ENCODE measurements at regions of chr1 and their contacts with region 1.

Region 1: GRCh38 chr1:65687428-65688214 is 105.1 kb upstream of the PDE4B start:
- DNase-seq: peak; percentile 81
- H3K4me3 ChIP-seq: no peak overlapping the region
- H3K27ac ChIP-seq: no peak overlapping the region
- H3K4me1 ChIP-seq: peaks cover 4% of the 10 kb centered on the region
- H3K27me3 ChIP-seq: no peaks in the 10 kb centered on the region
- CTCF ChIP-seq: peak; percentile 91

Region 2: GRCh38 chr1:65059930-65060538 is 627.6 kb before region 1 on chr1:
- CTCF ChIA-PET with region 1: no interaction called
- POLR2A ChIA-PET with region 1: no interaction called
- intact Hi-C with region 1: loop called (anchors 5 kb)
- DNase-seq: peak; percentile 60
- H3K4me3 ChIP-seq: no peak overlapping the region
- H3K27ac ChIP-seq: no peak overlapping the region
- H3K4me1 ChIP-seq: peaks cover 34% of the 10 kb centered on the region
- H3K27me3 ChIP-seq: no peaks in the 10 kb centered on the region
- CTCF ChIP-seq: peak; percentile 69

Region 3: GRCh38 chr1:65214340-65215027 is 473.1 kb before region 1 on chr1:
- CTCF ChIA-PET with region 1: interaction called, 18 read pairs
- POLR2A ChIA-PET with region 1: no interaction called
- intact Hi-C with region 1: loop called (anchors 5 kb)
- DNase-seq: no peak
- H3K4me3 ChIP-seq: no peak overlapping the region
- H3K27ac ChIP-seq: no peak overlapping the region
- H3K4me1 ChIP-seq: no peaks in the 10 kb centered on the region
- H3K27me3 ChIP-seq: no peaks in the 10 kb centered on the region
- CTCF ChIP-seq: no peak

Region 4: DNA sequence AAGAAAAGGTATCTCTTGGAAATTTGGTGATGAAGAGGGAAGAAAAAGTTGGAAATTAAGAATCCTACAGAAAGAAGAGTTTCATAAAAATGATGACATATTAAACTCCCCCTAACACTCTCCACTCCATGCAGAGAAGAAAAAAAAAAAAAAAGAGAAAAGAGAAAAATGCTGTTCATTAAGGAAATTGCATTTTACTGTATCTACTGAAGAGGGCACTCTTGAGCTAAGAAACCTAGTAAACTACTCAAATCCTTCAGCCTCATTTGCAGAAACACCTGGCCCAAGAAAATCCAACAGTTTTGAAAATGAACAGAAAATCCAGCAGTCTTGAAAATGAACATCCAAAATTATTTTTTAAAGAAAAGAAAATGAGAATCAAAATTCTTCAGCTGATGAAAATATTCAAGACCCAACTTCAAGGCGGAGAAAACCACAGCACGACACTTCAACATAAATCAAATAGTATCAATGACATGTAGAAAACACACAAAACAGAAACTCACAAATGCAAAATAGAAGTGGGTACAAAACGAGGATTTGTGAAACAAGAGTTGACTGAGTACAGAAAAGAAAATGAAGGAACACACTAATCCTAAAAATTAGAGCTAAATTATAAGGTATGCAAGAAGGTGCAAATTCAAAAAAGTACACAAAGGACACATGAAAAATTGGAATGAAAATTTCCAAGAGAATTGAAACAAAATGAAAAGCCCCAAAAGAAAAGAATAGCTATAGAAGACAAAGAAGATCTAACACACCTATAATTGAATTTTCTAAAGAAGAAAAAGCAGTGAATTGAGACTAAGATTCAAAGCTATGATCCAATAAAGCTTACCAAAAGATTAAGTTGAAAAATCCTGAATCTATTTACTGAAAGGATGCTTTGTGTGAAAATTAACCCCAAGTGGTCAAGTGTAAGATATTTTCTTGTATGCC is 451.5 kb before region 1 on chr1:
- CTCF ChIA-PET with region 1: interaction called, 6 read pairs
- POLR2A ChIA-PET with region 1: no interaction called
- intact Hi-C with region 1: loop called (anchors 5 kb)
- DNase-seq: peak; percentile 61
- H3K4me3 ChIP-seq: no peak overlapping the region
- H3K27ac ChIP-seq: no peak overlapping the region
- H3K4me1 ChIP-seq: no peaks in the 10 kb centered on the region
- H3K27me3 ChIP-seq: no peaks in the 10 kb centered on the region
- CTCF ChIP-seq: peak; percentile 73

Region 5: DNA sequence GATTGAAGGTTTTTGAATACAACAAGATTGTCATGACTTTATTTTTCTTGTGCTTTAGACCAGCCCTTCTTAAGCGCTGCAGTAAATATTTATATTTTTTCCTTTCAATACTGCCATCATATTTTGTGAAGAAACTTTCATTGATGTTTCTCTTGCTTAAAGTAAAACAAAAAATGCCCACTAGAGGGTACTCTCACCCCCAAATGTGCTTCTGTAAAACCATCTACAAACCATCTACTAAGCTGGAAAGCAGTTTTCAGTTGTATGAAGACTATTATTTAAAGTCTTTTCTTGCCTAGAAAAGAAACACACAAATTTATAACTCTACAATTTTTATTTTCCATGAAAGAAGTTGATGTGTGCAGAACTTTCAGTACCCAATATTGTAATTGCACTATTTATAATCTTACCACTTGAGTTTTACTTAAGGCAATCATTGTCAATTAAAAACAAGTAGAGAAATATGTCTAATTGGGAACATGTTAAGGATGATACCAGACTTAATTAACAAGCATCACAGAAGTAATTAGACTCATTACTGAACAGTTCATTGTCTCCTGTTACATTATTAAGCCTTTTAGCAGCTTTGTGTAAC is 256.4 kb before region 1 on chr1:
- CTCF ChIA-PET with region 1: interaction called, 9 read pairs
- POLR2A ChIA-PET with region 1: no interaction called
- intact Hi-C with region 1: loop called (anchors 2 kb)
- DNase-seq: peak; percentile 58
- H3K4me3 ChIP-seq: no peak overlapping the region
- H3K27ac ChIP-seq: no peak overlapping the region
- H3K4me1 ChIP-seq: no peaks in the 10 kb centered on the region
- H3K27me3 ChIP-seq: no peaks in the 10 kb centered on the region
- CTCF ChIP-seq: peak; percentile 77

Region 6: DNA sequence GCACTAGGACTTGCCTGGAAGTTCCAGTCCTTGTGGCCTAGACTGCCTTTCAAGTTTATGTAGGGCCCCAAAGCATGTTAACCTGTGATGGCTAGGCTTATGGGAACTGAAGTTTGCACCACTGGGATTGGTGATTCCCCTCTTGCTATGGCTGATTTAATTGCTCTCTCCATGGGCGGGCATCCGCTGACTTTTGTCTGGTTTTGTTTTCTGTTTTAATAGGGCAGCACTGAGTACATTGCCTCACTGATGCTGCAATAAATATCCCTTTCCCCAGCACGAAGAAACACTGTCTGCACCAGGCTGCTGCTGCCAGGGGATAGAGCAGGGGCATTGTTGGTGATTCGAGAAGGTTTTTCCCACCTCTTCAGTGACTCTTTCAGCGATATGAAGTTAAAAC is 31.8 kb after region 1 on chr1:
- CTCF ChIA-PET with region 1: no interaction called
- POLR2A ChIA-PET with region 1: no interaction called
- intact Hi-C with region 1: no loop called
- DNase-seq: no peak
- H3K4me3 ChIP-seq: no peak overlapping the region
- H3K27ac ChIP-seq: no peak overlapping the region
- H3K4me1 ChIP-seq: no peaks in the 10 kb centered on the region
- H3K27me3 ChIP-seq: no peaks in the 10 kb centered on the region
- CTCF ChIP-seq: no peak

Region 7: GRCh38 chr1:65850281-65850680 is 162.7 kb after region 1 on chr1:
- CTCF ChIA-PET with region 1: no interaction called
- POLR2A ChIA-PET with region 1: no interaction called
- intact Hi-C with region 1: no loop called
- DNase-seq: no peak
- H3K4me3 ChIP-seq: no peak overlapping the region
- H3K27ac ChIP-seq: no peak overlapping the region
- H3K4me1 ChIP-seq: no peaks in the 10 kb centered on the region
- H3K27me3 ChIP-seq: no peaks in the 10 kb centered on the region
- CTCF ChIP-seq: no peak